GM12878 (cell line): ENCODE measurements at regions of chr6 and their contacts with region 1.

Region 1: DNA sequence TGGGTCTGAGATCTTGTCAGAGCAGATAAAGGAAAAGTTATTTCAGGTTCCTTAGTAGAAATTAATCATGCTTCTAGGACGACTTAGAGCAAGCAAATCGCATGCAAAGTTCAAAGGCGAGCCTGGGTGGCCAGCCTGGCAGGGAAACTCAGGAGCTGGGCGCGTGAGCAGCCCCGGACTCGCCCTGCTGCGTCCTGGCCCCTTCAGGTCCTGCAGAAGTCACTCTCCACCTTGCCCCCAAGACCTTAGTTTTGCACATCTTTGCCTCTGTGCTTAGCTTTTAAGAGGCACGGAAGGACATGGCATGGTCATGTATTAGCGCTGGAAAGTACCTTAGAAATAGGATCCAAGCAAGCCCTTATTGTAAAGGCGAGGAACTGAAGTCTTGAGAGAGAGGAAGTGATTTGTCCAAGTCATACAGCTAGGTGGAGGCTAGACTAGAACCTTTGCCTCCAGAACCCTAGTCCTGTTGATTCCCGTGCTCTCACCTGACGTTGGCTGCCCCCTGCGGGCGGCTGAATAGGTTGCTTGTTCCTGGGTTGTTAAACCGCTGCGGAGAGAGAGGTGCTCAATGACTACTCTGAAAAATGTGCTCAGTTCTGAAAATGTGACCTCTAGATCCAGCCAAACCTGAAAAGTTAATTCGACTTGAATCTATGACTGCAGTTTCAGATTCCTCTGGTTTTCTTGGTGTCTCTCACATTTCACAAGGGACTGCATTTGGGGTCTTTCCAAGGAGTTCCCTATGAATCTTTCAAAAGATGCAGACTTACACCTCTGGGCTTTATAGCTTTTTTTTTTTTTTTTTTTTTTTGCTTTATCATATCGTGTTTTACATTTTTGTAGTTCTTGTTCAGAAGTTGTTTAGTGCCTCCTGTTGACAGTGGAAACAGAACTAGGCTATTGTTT is 2.7 kb downstream of the MYB start:
- DNase-seq: no peak
- ATAC-seq: peak; percentile 62
- H3K4me3 ChIP-seq: peak overlapping the region; percentile 89
- H3K27ac ChIP-seq: peak overlapping the region; percentile 99
- H3K4me1 ChIP-seq: peaks cover 16% of the 10 kb centered on the region
- H3K27me3 ChIP-seq: no peaks in the 10 kb centered on the region
- CTCF ChIP-seq: peak; percentile 71 to 91 (median 79); a peak in 5 of 6 replicates
- EP300 ChIP-seq: no peak; a peak in 1 of 4 replicates
- POLR2A ChIP-seq: peak; percentile 12
- RAD21 ChIP-seq: peak; percentile 90

Region 2: GRCh38 chr6:135014353-135014832 is 169.4 kb before region 1 on chr6:
- CTCF ChIA-PET with region 1: interaction called, 6 read pairs
- POLR2A ChIA-PET with region 1: no interaction called
- RAD21 ChIA-PET with region 1: interaction called, 5 read pairs
- SMC1A ChIA-PET with region 1: interaction called, 16 read pairs
- in situ Hi-C with region 1: loop called (anchors 5 kb)
- intact Hi-C with region 1: no loop called
- DNase-seq: peak; percentile 77
- ATAC-seq: peak; percentile 94
- H3K4me3 ChIP-seq: no peak overlapping the region
- H3K27ac ChIP-seq: peak overlapping the region; percentile 55
- H3K4me1 ChIP-seq: peaks cover 20% of the 10 kb centered on the region
- H3K27me3 ChIP-seq: no peaks in the 10 kb centered on the region
- CTCF ChIP-seq: no peak
- EP300 ChIP-seq: peak; percentile 69 to 77; a peak in 3 of 4 replicates
- POLR2A ChIP-seq: no peak
- RAD21 ChIP-seq: no peak

Region 3: DNA sequence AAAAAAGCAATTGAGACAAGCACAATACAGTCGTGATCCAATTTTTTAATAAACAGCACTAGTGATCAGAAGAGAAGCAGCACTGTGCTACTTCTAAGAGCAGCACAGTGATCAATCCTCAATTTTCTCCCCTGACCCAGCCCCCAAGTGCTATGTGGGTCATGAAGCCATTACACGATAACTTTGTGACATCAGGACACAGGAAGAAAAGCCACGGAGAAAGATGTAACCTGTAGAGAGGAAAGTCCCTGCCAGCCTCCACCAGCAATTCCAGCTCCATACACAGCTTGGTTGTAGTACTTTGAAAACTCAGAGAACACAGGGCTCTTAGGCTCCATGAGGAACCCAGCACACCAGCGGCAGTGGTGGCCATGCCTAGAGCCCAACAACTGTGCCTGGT is 48.0 kb before region 1 on chr6:
- CTCF ChIA-PET with region 1: interaction called, 149 read pairs
- POLR2A ChIA-PET with region 1: no interaction called
- RAD21 ChIA-PET with region 1: interaction called, 6 read pairs
- SMC1A ChIA-PET with region 1: interaction called, 133 read pairs
- in situ Hi-C with region 1: no loop called
- intact Hi-C with region 1: no loop called
- DNase-seq: no peak
- ATAC-seq: no peak; the same call in 2 of the 3 replicates
- H3K4me3 ChIP-seq: no peak overlapping the region
- H3K27ac ChIP-seq: no peak overlapping the region
- H3K4me1 ChIP-seq: no peaks in the 10 kb centered on the region; the same call in 1 of the 2 replicates
- H3K27me3 ChIP-seq: no peaks in the 10 kb centered on the region
- CTCF ChIP-seq: no peak
- EP300 ChIP-seq: no peak
- POLR2A ChIP-seq: no peak
- RAD21 ChIP-seq: no peak

Region 4: GRCh38 chr6:135170849-135171248 is 12.9 kb before region 1 on chr6:
- CTCF ChIA-PET with region 1: interaction called, 19 read pairs
- POLR2A ChIA-PET with region 1: interaction called, 6 read pairs
- RAD21 ChIA-PET with region 1: interaction called, 98 read pairs
- SMC1A ChIA-PET with region 1: interaction called, 55 read pairs
- in situ Hi-C with region 1: no loop called
- intact Hi-C with region 1: no loop called
- DNase-seq: no peak
- ATAC-seq: peak; percentile 87
- H3K4me3 ChIP-seq: no peak overlapping the region
- H3K27ac ChIP-seq: no peak overlapping the region
- H3K4me1 ChIP-seq: peaks cover 15% of the 10 kb centered on the region; the same call in 1 of the 2 replicates
- H3K27me3 ChIP-seq: no peaks in the 10 kb centered on the region
- CTCF ChIP-seq: no peak
- EP300 ChIP-seq: no peak
- POLR2A ChIP-seq: no peak
- RAD21 ChIP-seq: no peak

Region 5: GRCh38 chr6:135323202-135323668 is 139.4 kb after region 1 on chr6:
- CTCF ChIA-PET with region 1: interaction called, 13 read pairs
- POLR2A ChIA-PET with region 1: interaction called, 7 read pairs
- RAD21 ChIA-PET with region 1: interaction called, 11 read pairs
- SMC1A ChIA-PET with region 1: interaction called, 3 read pairs
- in situ Hi-C with region 1: no loop called
- intact Hi-C with region 1: loop called (anchors 2 kb)
- DNase-seq: peak; percentile 72
- ATAC-seq: peak; percentile 96
- H3K4me3 ChIP-seq: peak overlapping the region; percentile 51
- H3K27ac ChIP-seq: peak overlapping the region; percentile 80
- H3K4me1 ChIP-seq: peaks cover 22% of the 10 kb centered on the region
- H3K27me3 ChIP-seq: no peaks in the 10 kb centered on the region
- CTCF ChIP-seq: no peak
- EP300 ChIP-seq: peak; percentile 93 to 97
- POLR2A ChIP-seq: no peak
- RAD21 ChIP-seq: 0 out of 2 replicates have a peak, but pooled peaks have one; percentile 3